Astrocyte of the cerebellum (primary cell): ENCODE measurements at regions of chr20 and their contacts with region 1.

Region 1: DNA sequence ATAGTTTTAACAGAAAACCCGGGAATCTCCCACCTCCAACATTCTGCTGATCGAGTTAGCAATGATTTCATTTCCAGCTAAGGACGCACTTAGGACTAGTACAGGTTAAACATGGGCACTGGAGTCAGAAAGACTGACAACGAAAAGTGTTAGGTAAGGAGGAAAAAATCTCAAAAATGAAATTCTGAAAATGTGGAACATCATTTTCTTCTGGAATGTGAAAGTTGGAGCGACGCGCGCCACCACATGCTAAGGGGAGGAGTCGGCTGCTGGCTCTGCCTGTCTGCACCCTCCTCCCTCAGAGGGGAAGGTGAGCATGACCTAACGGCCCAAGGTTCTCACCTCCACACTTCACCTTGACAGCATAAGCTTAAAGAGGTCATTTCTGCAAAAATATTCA is 221.6 kb upstream of the KCNG1 start:
- DNase-seq: no peak
- H3K4me3 ChIP-seq: no peak overlapping the region
- CTCF ChIP-seq: no peak

Region 2: GRCh38 chr20:51169813-51170212 is 74.7 kb before region 1 on chr20:
- in situ Hi-C with region 1: loop called (anchors 5 kb)
- DNase-seq: no peak
- H3K4me3 ChIP-seq: no peak overlapping the region
- CTCF ChIP-seq: no peak

Region 3: GRCh38 chr20:51184289-51184688 is 60.2 kb before region 1 on chr20:
- in situ Hi-C with region 1: no loop called
- DNase-seq: peak; percentile 29
- H3K4me3 ChIP-seq: no peak overlapping the region
- CTCF ChIP-seq: no peak

Region 4: GRCh38 chr20:51272401-51272800 is 27.9 kb after region 1 on chr20:
- in situ Hi-C with region 1: no loop called
- DNase-seq: peak; percentile 16
- H3K4me3 ChIP-seq: no peak overlapping the region
- CTCF ChIP-seq: no peak